CD8-positive, alpha-beta memory T cell (primary cell): ENCODE measurements at regions of chr10 and their contacts with region 1.

Region 1: GRCh38 chr10:119859420-119860258 is 13.0 kb downstream of the MCMBP start:
- DNase-seq: peak in 2 of 5 donors; percentile 34 to 48
- H3K4me3 ChIP-seq: no peak overlapping the region
- H3K4me3 Mint-ChIP-seq: no peak overlapping the region
- H3K27ac ChIP-seq: no peak overlapping the region
- H3K27ac Mint-ChIP-seq: peak overlapping the region in 7 of 8 donors; percentile 41 to 85 (median 49)
- H3K4me1 ChIP-seq: peaks cover 4% of the 10 kb centered on the region
- H3K4me1 Mint-ChIP-seq: peaks cover 34 to 52% (median 48%) of the 10 kb centered on the region in 3 donors
- H3K27me3 ChIP-seq: no peaks in the 10 kb centered on the region
- H3K27me3 Mint-ChIP-seq: no peaks in the 10 kb centered on the region

Region 2: DNA sequence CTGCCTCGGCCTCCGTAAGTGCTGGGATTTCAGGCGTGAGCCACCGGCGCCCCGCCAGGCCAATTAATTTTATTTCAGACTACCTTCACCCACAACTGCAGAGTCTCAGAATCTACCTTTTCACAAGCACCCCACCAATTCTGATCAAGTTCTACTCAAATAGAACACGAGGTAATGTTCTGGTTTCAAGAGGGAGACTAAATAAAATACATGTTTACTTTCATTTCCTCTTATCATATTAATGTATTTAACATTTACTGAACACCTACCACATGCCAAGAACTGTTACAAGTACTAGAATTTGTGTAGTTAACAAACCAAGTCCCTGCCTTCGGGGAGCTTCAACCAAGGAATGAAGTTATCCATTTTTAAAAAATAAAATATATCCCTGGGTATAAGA is 291.7 kb before region 1 on chr10:
- CTCF ChIA-PET with region 1: no interaction called
- POLR2A ChIA-PET with region 1: no interaction called
- DNase-seq: no peak
- H3K4me3 ChIP-seq: no peak overlapping the region
- H3K4me3 Mint-ChIP-seq: no peak overlapping the region
- H3K27ac ChIP-seq: no peak overlapping the region
- H3K27ac Mint-ChIP-seq: no peak overlapping the region
- H3K4me1 ChIP-seq: no peaks in the 10 kb centered on the region
- H3K4me1 Mint-ChIP-seq: peaks cover 0 to 5% (median 5%) of the 10 kb centered on the region in 3 donors
- H3K27me3 ChIP-seq: no peaks in the 10 kb centered on the region
- H3K27me3 Mint-ChIP-seq: no peaks in the 10 kb centered on the region

Region 3: DNA sequence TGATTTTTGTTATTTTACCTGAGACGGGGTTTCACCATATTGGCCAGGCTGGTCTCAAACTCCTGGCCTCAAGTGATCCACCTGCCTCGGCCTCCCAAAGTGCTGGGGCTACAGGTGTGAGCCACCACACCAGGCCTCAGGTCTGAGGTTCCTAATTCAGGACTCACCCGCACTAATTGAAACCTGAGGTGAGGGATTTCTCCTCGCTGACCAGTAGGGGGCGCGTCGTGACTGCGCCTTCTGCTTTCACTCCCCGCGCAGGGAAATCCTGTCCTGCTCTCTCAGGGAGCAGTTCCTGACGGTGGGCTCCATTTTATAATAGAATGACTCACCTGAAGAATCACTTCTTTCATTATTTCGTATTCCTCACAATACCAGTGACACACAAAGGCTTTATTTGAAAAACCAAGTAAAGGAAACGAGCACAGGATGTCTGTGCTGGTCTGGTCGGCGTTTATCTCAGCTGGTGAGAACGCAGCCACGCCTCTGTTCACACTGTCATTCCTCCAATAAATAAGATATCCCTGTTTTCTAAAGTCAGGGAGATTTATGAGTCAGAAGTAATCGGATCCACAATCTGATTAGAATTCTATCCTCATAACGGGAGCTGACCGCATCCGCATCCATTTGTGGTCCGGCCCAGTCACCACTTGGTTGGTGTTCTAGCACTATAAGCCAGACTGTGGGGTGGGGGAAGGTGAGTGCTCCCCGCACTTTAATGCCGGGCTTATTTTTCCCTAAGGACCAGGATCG is 173.0 kb before region 1 on chr10:
- CTCF ChIA-PET with region 1: interaction called, 21 read pairs
- POLR2A ChIA-PET with region 1: no interaction called
- DNase-seq: peak; percentile 69 to 85 (median 72)
- H3K4me3 ChIP-seq: peak overlapping the region; percentile 35
- H3K4me3 Mint-ChIP-seq: peak overlapping the region; percentile 8 to 88 (median 81)
- H3K27ac ChIP-seq: no peak overlapping the region
- H3K27ac Mint-ChIP-seq: peak overlapping the region in 6 of 8 donors; percentile 50 to 90 (median 57)
- H3K4me1 ChIP-seq: peaks cover 6% of the 10 kb centered on the region
- H3K4me1 Mint-ChIP-seq: peaks cover 13 to 21% (median 18%) of the 10 kb centered on the region in 3 donors
- H3K27me3 ChIP-seq: no peaks in the 10 kb centered on the region
- H3K27me3 Mint-ChIP-seq: peaks cover 1 to 6% of the 10 kb centered on the region in 2 donors

Region 4: DNA sequence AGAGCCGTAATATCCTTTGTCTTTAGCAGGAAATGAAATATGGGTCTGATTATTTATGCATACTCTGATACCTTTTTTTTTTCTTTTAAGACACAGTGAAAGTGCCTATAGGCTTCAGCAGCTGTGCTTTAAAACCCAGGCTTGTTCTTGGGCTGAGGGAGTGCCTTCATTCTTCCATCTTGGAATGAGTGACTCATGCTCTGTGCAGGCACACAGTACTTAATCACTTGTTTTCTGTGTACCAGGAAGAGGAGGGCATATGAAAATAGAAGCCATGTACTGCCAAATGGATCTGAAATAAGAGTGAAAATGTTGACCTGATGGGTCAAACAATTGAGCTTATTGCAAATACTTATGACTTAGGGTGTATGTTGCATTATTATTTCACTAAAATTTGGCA is 121.8 kb before region 1 on chr10:
- CTCF ChIA-PET with region 1: no interaction called
- POLR2A ChIA-PET with region 1: no interaction called
- DNase-seq: no peak
- H3K4me3 ChIP-seq: no peak overlapping the region
- H3K4me3 Mint-ChIP-seq: no peak overlapping the region
- H3K27ac ChIP-seq: no peak overlapping the region
- H3K27ac Mint-ChIP-seq: peak overlapping the region in 1 of 8 donors; percentile 24
- H3K4me1 ChIP-seq: peaks cover 17% of the 10 kb centered on the region
- H3K4me1 Mint-ChIP-seq: peaks cover 11 to 32% (median 23%) of the 10 kb centered on the region in 3 donors
- H3K27me3 ChIP-seq: no peaks in the 10 kb centered on the region
- H3K27me3 Mint-ChIP-seq: no peaks in the 10 kb centered on the region

Region 5: DNA sequence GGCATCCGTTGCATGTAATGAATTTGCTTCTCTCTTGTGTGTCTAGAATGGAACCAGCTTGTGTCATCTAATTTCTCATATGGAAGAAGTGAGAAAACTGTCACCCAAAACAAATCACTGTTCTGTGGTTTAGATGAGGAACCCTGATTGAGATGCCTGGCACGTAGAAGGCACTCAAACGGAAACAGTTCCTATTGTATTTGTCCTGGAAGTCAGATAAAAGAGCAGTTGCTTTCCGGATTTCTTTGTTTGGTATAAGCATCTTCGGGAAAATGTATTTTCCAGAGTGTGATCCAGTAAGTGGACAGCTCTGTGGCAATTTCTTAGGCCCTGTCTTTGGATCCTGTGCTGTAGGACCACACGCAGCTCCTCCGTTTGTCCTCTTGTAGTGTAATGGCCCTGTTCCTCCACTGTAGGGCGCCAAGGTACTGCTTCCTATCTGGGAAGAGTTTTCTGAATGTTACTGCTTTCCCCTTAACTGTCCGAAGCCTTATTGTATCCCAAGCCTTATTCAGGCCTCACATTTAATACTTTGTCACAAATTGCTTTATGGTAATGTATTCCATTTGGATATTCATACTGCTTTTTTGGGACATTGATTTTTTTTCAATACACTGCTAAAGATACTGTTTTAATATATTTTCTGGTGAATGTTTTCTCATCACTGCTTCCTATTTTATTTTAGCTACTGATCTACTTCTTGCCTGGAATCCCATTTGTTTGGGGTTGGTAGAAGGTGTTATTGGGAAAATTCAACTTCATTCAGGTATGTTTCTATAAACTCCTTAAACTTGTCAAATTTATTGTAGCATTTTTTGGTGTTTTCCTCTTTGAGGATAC is 109.0 kb before region 1 on chr10:
- CTCF ChIA-PET with region 1: interaction called, 12 read pairs
- POLR2A ChIA-PET with region 1: no interaction called
- DNase-seq: peak; percentile 26 to 58 (median 35)
- H3K4me3 ChIP-seq: no peak overlapping the region
- H3K4me3 Mint-ChIP-seq: no peak overlapping the region
- H3K27ac ChIP-seq: no peak overlapping the region
- H3K27ac Mint-ChIP-seq: peak overlapping the region in 2 of 8 donors; percentile 18 to 26
- H3K4me1 ChIP-seq: no peaks in the 10 kb centered on the region
- H3K4me1 Mint-ChIP-seq: peaks cover 4 to 8% (median 6%) of the 10 kb centered on the region in 3 donors
- H3K27me3 ChIP-seq: no peaks in the 10 kb centered on the region
- H3K27me3 Mint-ChIP-seq: peaks cover 0 to 3% of the 10 kb centered on the region in 2 donors

Region 6: DNA sequence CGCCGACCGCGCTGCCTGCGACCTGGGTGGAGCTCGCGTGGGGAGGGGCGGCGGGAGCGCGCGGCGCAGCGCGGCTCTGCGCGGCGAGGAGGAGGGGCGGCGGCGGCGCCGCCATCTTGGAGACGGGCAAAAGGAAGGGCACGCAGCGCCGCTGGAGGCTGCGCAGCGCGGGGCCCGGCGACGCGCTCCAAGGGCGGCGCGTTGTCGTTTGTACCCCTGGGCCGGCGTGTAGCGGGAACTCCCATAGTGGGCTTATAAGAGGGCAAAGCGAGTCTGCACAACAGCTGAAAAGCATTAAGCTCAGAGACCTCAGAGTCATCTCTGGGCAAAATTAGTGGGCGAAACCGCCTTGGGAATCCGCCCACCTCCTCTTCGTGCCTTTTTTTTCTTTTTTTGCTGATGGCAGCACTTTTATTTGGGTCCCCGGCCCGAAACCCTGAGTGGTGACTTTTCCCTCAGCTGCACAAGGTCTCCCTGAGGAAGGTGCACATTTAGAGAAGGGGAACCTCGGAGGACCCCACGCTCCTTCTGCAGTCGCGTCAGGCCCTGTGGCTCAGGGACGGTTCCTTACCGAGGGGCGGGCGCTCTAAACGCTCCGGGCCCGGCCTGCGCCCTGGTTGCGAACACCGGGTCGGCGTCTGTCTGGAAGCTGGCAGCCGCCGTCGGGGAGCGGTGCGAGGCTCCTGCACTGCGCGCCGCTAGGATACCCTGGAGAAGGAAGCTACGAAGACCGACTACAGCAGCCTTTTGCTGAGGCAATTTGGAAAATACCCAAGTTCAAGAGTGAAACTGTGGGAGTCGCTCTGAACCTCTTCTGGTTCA is 13.4 kb after region 1 on chr10:
- CTCF ChIA-PET with region 1: interaction called, 33 read pairs
- POLR2A ChIA-PET with region 1: interaction called, 5 read pairs
- DNase-seq: peak; percentile 82 to 91 (median 87)
- H3K4me3 ChIP-seq: peak overlapping the region; percentile 94
- H3K4me3 Mint-ChIP-seq: peak overlapping the region; percentile 87 to 96 (median 90)
- H3K27ac ChIP-seq: peak overlapping the region; percentile 81
- H3K27ac Mint-ChIP-seq: peak overlapping the region; percentile 85 to 94 (median 91)
- H3K4me1 ChIP-seq: peaks cover 29% of the 10 kb centered on the region
- H3K4me1 Mint-ChIP-seq: peaks cover 33 to 44% (median 43%) of the 10 kb centered on the region in 3 donors
- H3K27me3 ChIP-seq: no peaks in the 10 kb centered on the region
- H3K27me3 Mint-ChIP-seq: no peaks in the 10 kb centered on the region